Endothelial cell of umbilical vein (primary cell): ENCODE measurements at regions of chr3 and their contacts with region 1.

Region 1: DNA sequence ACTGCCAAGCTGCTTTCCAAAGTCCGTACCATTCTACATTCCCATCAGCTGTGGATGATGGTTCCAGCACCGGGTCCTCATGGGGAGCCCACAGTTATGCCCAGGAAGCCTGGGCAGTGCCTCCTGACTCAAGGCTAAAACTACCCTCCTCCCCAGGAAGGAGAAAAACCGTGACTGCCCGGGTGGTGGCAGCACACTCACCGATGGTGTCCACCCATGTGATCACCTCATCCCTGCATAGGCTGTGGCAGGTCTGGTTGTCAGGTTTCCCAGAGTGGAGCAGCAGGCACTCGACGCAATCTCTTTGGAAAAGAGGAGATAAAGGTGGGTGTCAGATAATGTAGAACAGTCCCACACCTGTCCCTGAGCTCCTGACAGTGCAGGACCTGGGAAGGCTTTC is 38.6 kb downstream of the UMPS start:
- DNase-seq: no peak
- H3K4me3 ChIP-seq: no peak overlapping the region
- H3K27ac ChIP-seq: no peak overlapping the region
- H3K4me1 ChIP-seq: peaks cover 31% of the 10 kb centered on the region
- H3K27me3 ChIP-seq: no peaks in the 10 kb centered on the region
- CTCF ChIP-seq: peak in 1 of 2 donors; percentile 26
- POLR2A ChIP-seq: no peak

Region 2: GRCh38 chr3:124834723-124835718 is 66.2 kb after region 1 on chr3:
- CTCF ChIA-PET with region 1: interaction called, 3 read pairs
- POLR2A ChIA-PET with region 1: no interaction called
- dilution Hi-C with region 1: no loop called
- intact Hi-C with region 1: loop called (anchors 1 kb)
- DNase-seq: peak; percentile 90
- H3K4me3 ChIP-seq: no peak overlapping the region
- H3K27ac ChIP-seq: peak overlapping the region; percentile 25
- H3K4me1 ChIP-seq: peaks cover 44% of the 10 kb centered on the region
- H3K27me3 ChIP-seq: no peaks in the 10 kb centered on the region
- CTCF ChIP-seq: no peak
- POLR2A ChIP-seq: no peak

Region 3: DNA sequence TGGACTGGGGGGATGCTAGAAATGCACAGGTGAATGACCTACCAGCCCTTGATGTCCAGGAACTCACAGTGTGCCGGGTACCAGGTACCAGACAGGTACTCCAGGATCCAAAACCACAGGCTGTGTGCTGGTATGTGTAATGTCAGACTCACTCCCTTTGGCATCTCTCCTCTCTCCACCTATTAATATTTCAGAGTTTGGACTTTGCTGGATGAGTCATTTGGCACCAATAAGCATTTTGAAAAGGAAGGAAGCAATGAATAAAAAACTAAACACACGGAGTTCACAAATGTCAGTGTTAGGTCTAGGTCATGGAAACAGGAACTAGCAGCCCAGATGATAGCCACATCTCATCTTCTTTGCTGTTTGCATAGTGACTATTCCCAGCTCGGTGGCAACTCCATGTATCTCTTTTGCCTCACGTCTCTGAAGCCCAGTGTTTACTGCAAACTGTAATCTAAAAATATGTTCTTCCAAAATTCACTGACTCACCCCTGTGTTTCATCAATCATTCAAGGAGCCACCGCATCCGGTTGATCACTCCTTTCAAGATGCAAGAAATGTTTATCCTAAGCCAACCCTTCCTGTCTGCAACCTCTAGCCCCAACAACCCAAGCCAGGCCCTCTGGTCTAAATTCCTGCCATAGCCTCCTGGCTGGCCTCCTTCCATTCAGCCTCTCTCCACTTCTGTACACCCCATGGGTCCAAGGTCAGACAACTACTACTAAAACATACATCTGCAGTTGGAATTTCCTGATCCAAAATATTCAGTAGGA is 109.9 kb after region 1 on chr3:
- CTCF ChIA-PET with region 1: interaction called, 5 read pairs
- POLR2A ChIA-PET with region 1: no interaction called
- dilution Hi-C with region 1: loop called (anchors 25 kb)
- intact Hi-C with region 1: loop called (anchors 1 kb)
- DNase-seq: peak; percentile 94
- H3K4me3 ChIP-seq: no peak overlapping the region
- H3K27ac ChIP-seq: peak overlapping the region; percentile 91
- H3K4me1 ChIP-seq: peaks cover 34% of the 10 kb centered on the region
- H3K27me3 ChIP-seq: no peaks in the 10 kb centered on the region
- CTCF ChIP-seq: no peak
- POLR2A ChIP-seq: peak; percentile 57

Region 4: DNA sequence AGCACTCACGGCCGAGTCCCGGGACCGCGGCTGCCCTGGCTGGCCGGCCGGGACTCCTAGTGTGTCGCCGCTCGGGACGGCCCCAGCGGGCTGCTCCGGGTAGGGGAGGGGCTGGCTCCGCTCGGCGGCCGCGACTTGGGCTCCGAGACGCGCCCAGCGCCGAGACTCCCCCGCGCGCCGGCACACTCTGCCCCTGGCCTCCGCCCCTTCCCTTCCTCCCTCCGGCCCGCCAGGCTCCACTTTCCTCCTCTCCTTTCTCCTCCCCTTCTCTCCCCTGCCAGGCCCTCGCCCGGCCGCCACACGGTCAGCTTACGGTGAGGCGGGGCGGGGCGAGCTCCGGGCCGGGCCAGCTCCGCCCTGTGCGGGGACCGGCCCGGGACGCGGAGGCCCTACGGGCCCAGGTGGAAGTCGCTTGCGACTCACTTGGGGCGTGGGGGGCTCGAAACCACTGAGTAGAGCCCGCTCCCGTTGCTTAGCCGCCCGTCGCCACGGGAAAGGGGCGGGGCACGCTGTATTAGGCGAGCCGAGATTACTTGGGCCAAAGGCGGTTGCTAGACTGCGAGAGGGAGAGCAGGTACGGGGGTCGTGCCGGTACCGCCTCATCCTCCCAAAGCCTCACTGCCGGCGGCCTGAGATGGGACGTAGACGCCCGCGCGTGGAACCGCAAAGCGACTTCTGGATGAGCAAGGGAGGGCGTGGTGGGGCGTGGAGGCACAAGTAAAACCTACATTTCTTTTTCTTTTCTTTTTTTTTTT is 118.5 kb after region 1 on chr3 and contains the start of gene ITGB5:
- CTCF ChIA-PET with region 1: interaction called, 4 read pairs
- POLR2A ChIA-PET with region 1: interaction called, 3 read pairs
- dilution Hi-C with region 1: loop called (anchors 25 kb)
- intact Hi-C with region 1: loop called (anchors 1 kb)
- DNase-seq: peak; percentile 72
- H3K4me3 ChIP-seq: peak within 1 kb of the TSS; percentile 36 to 73 (median 47)
- H3K27ac ChIP-seq: peak within 1 kb of the TSS; percentile 57
- H3K4me1 ChIP-seq: peaks cover 23% of the 10 kb centered on the region
- H3K27me3 ChIP-seq: no peaks in the 10 kb centered on the region
- CTCF ChIP-seq: no peak
- POLR2A ChIP-seq: peak; percentile 57
- total RNA-seq, gene ITGB5: 144 TPM in 2 replicates

Region 5: GRCh38 chr3:124951511-124952281 is 182.9 kb after region 1 on chr3:
- CTCF ChIA-PET with region 1: no interaction called
- POLR2A ChIA-PET with region 1: no interaction called
- dilution Hi-C with region 1: no loop called
- intact Hi-C with region 1: no loop called
- DNase-seq: no peak
- H3K4me3 ChIP-seq: no peak overlapping the region
- H3K27ac ChIP-seq: no peak overlapping the region
- H3K4me1 ChIP-seq: no peaks in the 10 kb centered on the region
- H3K27me3 ChIP-seq: peaks cover 0 to 2% of the 10 kb centered on the region in 2 experiments
- CTCF ChIP-seq: no peak
- POLR2A ChIP-seq: no peak

Region 6: GRCh38 chr3:125334675-125335560 is 566.1 kb after region 1 on chr3:
- CTCF ChIA-PET with region 1: no interaction called
- POLR2A ChIA-PET with region 1: no interaction called
- dilution Hi-C with region 1: no loop called
- intact Hi-C with region 1: no loop called
- DNase-seq: peak; percentile 61
- H3K4me3 ChIP-seq: peak overlapping the region in 1 of 3 experiments; percentile 30
- H3K27ac ChIP-seq: peak overlapping the region; percentile 36
- H3K4me1 ChIP-seq: peaks cover 42% of the 10 kb centered on the region
- H3K27me3 ChIP-seq: no peaks in the 10 kb centered on the region
- CTCF ChIP-seq: no peak
- POLR2A ChIP-seq: no peak